PC-9 (cell line): ENCODE measurements at regions of chrX and their contacts with region 1.

Region 1: GRCh38 chrX:29617725-29618124 is 597.6 kb upstream of the MAGEB2 start:
- DNase-seq: no peak
- H3K4me3 ChIP-seq: no peak overlapping the region
- H3K27ac ChIP-seq: no peak overlapping the region
- H3K4me1 ChIP-seq: no peaks in the 10 kb centered on the region
- H3K27me3 ChIP-seq: no peaks in the 10 kb centered on the region
- CTCF ChIP-seq: no peak

Region 2: DNA sequence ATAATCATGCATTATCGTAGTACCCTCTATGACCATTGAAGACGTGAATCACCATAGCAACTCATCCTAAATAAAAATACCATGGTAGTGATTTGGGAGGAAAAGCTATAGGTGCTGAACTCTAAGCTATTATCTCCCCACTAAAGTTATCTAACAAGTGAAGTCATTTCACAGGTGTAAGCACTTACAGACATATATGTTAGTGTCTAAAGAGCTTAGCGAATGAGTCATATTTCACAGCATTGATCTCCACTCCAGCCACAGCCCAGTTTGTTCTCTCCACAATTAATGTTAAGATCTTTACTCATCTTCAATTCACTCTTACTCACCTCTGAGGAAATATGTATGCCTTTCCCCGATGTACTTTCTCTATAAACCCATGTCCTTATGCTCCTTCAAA is 1693.5 kb before region 1 on chrX:
- CTCF ChIA-PET with region 1: no interaction called
- POLR2A ChIA-PET with region 1: no interaction called
- intact Hi-C with region 1: loop called (anchors 5 kb)
- DNase-seq: no peak
- H3K4me3 ChIP-seq: no peak overlapping the region
- H3K27ac ChIP-seq: no peak overlapping the region
- H3K4me1 ChIP-seq: no peaks in the 10 kb centered on the region
- H3K27me3 ChIP-seq: no peaks in the 10 kb centered on the region
- CTCF ChIP-seq: no peak

Region 3: DNA sequence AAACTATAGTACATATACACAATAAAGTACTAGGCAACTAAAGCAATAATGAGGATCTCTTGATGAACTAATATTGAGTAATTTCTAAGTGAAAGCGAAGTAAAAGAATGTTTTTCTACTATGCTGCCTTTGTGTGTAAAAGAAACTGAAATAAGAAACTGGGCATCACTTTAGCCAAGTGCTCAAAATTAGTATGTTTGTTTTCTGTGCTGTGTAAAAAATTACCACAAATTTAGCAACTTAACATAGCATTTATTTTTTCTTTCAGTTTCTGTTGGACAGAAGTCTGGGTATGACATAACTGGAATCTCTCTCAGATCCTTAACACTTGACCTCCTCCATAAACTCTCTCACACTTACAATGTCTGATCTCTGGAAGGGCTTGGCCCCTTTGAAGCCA is 89.4 kb before region 1 on chrX:
- CTCF ChIA-PET with region 1: no interaction called
- POLR2A ChIA-PET with region 1: no interaction called
- intact Hi-C with region 1: no loop called
- DNase-seq: no peak
- H3K4me3 ChIP-seq: no peak overlapping the region
- H3K27ac ChIP-seq: no peak overlapping the region
- H3K4me1 ChIP-seq: no peaks in the 10 kb centered on the region
- H3K27me3 ChIP-seq: no peaks in the 10 kb centered on the region
- CTCF ChIP-seq: no peak

Region 4: DNA sequence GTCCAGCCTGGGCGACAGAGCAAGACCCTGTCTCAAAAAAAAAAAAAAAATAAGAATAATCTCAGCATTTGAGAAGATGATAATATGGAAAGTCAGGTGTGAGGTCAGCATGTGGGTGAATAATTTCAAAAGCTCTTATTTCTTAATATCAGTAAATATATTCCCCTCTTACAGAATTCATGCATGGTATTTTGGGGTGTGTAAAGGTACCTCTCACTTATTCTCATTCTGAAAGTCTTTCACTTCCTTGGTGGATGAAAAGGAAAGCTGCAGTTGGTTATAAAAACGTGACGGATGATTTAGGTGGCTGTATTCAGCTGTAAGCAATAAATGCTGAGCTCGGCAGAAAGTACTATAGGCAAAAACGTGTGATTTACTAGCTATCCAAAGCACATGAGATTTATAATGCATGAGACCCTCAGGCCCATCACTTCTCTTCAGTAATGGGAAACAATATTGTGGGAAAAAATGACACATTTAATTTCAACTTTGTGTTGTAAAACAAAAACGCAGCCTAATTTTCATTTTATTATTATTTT is 244.5 kb after region 1 on chrX:
- CTCF ChIA-PET with region 1: interaction called, 14 read pairs
- POLR2A ChIA-PET with region 1: no interaction called
- intact Hi-C with region 1: no loop called
- DNase-seq: no peak
- H3K4me3 ChIP-seq: no peak overlapping the region
- H3K27ac ChIP-seq: no peak overlapping the region
- H3K4me1 ChIP-seq: no peaks in the 10 kb centered on the region
- H3K27me3 ChIP-seq: no peaks in the 10 kb centered on the region
- CTCF ChIP-seq: no peak